ENCODE measurements at regions of chr19 and their contacts with region 1.

Region 1: GRCh38 chr19:732148-733069 is 18.5 kb upstream of the MISP start:
- DNase-seq: no peak
- ATAC-seq: no peak

Region 2: DNA sequence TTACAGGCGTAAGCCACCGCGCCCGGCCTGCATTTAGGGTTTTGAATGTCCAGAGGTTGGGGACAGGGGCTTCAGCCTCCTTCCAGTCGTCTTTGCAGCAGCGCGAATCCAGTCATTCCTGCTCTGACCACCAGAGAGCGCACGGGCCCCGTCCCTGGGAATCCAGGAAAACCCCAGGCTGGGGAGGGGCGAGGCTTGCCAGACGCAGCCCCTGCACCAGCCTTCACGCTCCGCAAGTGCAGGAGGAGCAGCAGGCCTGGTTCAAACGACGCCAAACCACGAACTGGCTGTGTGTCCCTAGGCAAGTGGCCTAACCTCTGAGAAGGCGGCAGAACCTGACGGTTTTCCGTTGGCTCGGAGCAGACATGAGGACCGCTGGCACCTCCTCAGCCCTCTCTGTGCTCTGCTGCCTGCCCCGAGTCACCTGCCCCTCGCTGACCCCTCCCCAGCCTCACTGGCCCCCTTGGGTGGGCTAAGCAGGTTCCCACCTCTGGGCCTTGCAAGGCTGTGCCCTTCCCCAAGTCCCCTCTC is 67.4 kb before region 1 on chr19:
- intact Hi-C with region 1: loop called (anchors 1 to 5 kb)
- DNase-seq: peak; percentile 86
- ATAC-seq: peak; percentile 16 to 41

Measured in left cardiac atrium (tissue), 4 donors.